Tibial artery (tissue), 4 donors: ENCODE measurements at regions of chr15 and their contacts with region 1.

Region 1: DNA sequence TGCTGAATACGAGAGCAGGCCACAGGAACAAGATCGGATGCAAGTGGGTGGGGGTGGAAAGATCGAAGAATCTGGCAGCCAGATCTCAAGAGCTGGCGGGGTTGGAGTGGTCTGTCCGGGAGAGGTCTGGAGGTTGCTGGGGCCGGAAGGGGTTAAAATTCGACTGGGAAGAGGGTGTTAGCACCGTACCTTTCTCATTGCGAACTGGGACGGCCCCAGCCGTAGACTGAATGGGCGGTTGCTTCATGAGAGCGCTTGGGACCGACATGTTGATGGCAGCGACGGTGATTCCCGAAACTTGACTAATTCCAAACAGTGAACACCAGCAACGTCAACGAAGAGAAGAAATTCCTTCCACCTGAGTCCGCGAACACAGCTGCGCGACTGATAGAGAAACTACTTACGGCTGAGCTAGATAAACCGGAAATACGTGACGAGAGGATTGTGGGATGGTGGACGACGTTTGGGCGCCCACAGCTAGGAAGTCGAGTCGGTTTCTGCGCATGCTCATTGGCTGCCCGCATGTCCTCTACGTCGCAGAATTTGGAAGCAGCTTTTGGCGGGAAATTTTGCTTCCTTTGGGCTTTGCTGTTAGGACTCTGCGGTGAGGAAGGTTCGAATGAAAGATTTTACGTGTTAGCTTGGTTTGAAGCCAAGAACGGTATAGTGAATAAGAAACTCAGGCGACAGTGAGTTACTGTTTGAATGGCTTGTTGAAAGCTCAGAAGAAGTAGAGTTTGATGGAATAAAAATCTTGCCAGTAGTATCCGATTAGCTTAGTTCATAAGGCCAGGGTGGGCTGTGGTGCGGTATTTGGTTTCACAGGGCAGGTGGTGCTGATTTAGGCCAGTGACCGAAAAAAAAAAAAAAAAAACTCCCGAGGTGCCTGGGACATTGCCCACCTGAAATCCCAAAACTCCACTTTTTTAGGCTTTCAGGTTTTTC is at the start of gene MFAP1:
- DNase-seq: peak; percentile 96
- H3K4me3 ChIP-seq: peak within 1 kb of the TSS; percentile 78 to 87
- H3K27ac ChIP-seq: peak within 1 kb of the TSS; percentile 91 to 92
- H3K4me1 ChIP-seq: peaks cover 4 to 53% (median 31%) of the 10 kb centered on the region in 4 donors
- H3K27me3 ChIP-seq: no peaks in the 10 kb centered on the region
- CTCF ChIP-seq: no peak

Region 2: GRCh38 chr15:43800286-43801141 is 24.1 kb before region 1 on chr15 and contains the start of gene HYPK:
- intact Hi-C with region 1: loop called (anchors 2 kb)
- DNase-seq: peak; percentile 95 to 97
- H3K4me3 ChIP-seq: peak within 1 kb of the TSS; percentile 67 to 79
- H3K27ac ChIP-seq: peak within 1 kb of the TSS; percentile 79 to 90
- H3K4me1 ChIP-seq: peaks cover 0 to 50% (median 33%) of the 10 kb centered on the region in 4 donors
- H3K27me3 ChIP-seq: no peaks in the 10 kb centered on the region
- CTCF ChIP-seq: no peak

Region 3: GRCh38 chr15:44144184-44144583 is 319.6 kb after region 1 on chr15:
- intact Hi-C with region 1: no loop called
- DNase-seq: no peak
- H3K4me3 ChIP-seq: no peak overlapping the region
- H3K27ac ChIP-seq: no peak overlapping the region
- H3K4me1 ChIP-seq: no peaks in the 10 kb centered on the region
- H3K27me3 ChIP-seq: no peaks in the 10 kb centered on the region
- CTCF ChIP-seq: no peak